ENCODE measurements at regions of chr6 and their contacts with region 1.

Region 1: GRCh38 chr6:8983188-8983688 is 547.9 kb upstream of the SLC35B3 start:
- DNase-seq: peak; percentile 96
- H3K4me3 ChIP-seq: no peak overlapping the region
- H3K27ac ChIP-seq: no peak overlapping the region
- H3K4me1 ChIP-seq: peaks cover 19% of the 10 kb centered on the region
- H3K27me3 ChIP-seq: no peaks in the 10 kb centered on the region
- CTCF ChIP-seq: peak; percentile 98

Region 2: GRCh38 chr6:8321671-8322404 is 661.4 kb before region 1 on chr6:
- CTCF ChIA-PET with region 1: no interaction called
- POLR2A ChIA-PET with region 1: no interaction called
- intact Hi-C with region 1: loop called (anchors 5 kb)
- DNase-seq: peak; percentile 91
- H3K4me3 ChIP-seq: no peak overlapping the region
- H3K27ac ChIP-seq: peak overlapping the region; percentile 99
- H3K4me1 ChIP-seq: peaks cover 48% of the 10 kb centered on the region
- H3K27me3 ChIP-seq: no peaks in the 10 kb centered on the region
- CTCF ChIP-seq: 0 out of 2 replicates have a peak, but pooled peaks have one; percentile 9

Region 3: GRCh38 chr6:8707956-8708772 is 275.1 kb before region 1 on chr6:
- CTCF ChIA-PET with region 1: no interaction called
- POLR2A ChIA-PET with region 1: no interaction called
- intact Hi-C with region 1: loop called (anchors 1 kb)
- DNase-seq: peak; percentile 81
- H3K4me3 ChIP-seq: peak overlapping the region; percentile 20
- H3K27ac ChIP-seq: no peak overlapping the region
- H3K4me1 ChIP-seq: peaks cover 40% of the 10 kb centered on the region
- H3K27me3 ChIP-seq: no peaks in the 10 kb centered on the region
- CTCF ChIP-seq: peak; percentile 77

Region 4: DNA sequence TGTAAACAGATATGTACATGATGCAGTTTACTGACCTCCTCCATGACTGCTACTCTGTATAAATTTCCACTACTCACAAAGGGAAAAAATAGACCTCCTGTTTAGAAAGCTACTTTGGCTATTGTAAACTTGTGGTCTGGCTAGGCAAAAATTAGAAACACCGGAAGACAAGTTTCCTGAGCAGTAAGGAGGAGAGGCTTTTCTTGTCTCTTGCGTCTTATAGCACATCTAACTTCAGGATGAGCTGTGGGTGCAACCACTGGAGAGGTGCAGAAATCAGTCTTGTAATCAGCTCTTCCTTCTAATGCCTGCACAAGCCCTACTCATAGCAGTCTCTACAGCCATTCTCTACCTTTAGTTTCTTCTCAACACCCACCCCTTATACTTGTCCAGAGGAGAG is 251.4 kb before region 1 on chr6:
- CTCF ChIA-PET with region 1: no interaction called
- POLR2A ChIA-PET with region 1: no interaction called
- intact Hi-C with region 1: no loop called
- DNase-seq: no peak
- H3K4me3 ChIP-seq: no peak overlapping the region
- H3K27ac ChIP-seq: no peak overlapping the region
- H3K4me1 ChIP-seq: peaks cover 16% of the 10 kb centered on the region
- H3K27me3 ChIP-seq: no peaks in the 10 kb centered on the region
- CTCF ChIP-seq: no peak

Region 5: GRCh38 chr6:8888468-8888867 is 94.8 kb before region 1 on chr6:
- CTCF ChIA-PET with region 1: no interaction called
- POLR2A ChIA-PET with region 1: no interaction called
- intact Hi-C with region 1: no loop called
- DNase-seq: peak; percentile 52
- H3K4me3 ChIP-seq: no peak overlapping the region
- H3K27ac ChIP-seq: no peak overlapping the region
- H3K4me1 ChIP-seq: no peaks in the 10 kb centered on the region
- H3K27me3 ChIP-seq: no peaks in the 10 kb centered on the region
- CTCF ChIP-seq: peak; percentile 65

Region 6: DNA sequence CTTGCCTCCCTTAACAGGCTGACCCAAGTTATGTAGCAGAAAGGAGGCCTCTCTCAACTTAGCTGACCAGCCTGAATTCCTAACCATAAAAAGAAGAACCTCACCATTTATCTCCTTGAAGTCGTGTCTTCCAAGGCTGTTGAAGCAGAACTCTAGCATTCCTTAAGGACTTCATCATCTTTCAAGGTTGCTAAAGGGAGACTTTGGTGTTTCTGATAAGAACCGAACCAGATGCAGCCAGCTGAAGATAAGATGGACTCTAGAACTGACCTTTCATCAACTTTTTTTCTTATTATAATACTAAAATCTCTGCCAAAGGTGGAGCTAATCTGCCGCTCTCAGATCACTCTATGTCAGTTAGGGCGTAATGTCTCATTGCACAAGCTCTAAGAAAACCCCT is 23.8 kb after region 1 on chr6:
- CTCF ChIA-PET with region 1: no interaction called
- POLR2A ChIA-PET with region 1: no interaction called
- intact Hi-C with region 1: no loop called
- DNase-seq: no peak
- H3K4me3 ChIP-seq: no peak overlapping the region
- H3K27ac ChIP-seq: no peak overlapping the region
- H3K4me1 ChIP-seq: no peaks in the 10 kb centered on the region
- H3K27me3 ChIP-seq: no peaks in the 10 kb centered on the region
- CTCF ChIP-seq: no peak

Region 7: GRCh38 chr6:9126878-9127560 is 143.8 kb after region 1 on chr6:
- CTCF ChIA-PET with region 1: no interaction called
- POLR2A ChIA-PET with region 1: no interaction called
- intact Hi-C with region 1: no loop called
- DNase-seq: peak; percentile 88
- H3K4me3 ChIP-seq: no peak overlapping the region
- H3K27ac ChIP-seq: no peak overlapping the region
- H3K4me1 ChIP-seq: peaks cover 40% of the 10 kb centered on the region
- H3K27me3 ChIP-seq: no peaks in the 10 kb centered on the region
- CTCF ChIP-seq: no peak

Region 8: DNA sequence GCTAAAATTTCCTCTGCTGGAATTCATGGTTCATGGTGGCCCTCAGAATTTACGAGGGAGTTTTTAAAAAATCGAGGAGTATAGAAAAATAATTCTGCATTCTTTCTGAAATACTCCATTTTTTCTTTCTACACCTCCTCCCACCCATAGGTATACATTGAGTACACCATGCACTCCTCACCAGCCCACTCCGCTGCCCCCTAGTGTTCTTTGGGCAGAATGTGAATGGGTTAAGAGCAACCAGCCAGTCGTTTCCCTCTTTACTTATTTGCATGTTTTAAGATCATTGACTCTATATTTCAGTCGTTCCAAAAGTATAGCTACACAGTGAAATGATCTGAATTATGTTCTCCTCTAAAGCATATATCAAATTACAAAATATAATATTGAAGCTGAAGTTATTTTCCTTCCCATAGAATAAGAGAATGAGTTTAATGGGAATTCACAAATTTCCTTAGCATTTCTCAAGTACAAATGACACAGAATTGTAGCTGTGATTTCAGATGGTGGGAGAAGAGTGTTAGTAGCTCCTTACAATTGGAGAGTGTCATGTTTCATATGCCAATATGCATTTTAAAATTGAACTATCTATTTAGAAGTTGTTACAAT is 429.8 kb after region 1 on chr6:
- CTCF ChIA-PET with region 1: no interaction called
- POLR2A ChIA-PET with region 1: no interaction called
- intact Hi-C with region 1: loop called (anchors 2 kb)
- DNase-seq: peak; percentile 80
- H3K4me3 ChIP-seq: no peak overlapping the region
- H3K27ac ChIP-seq: no peak overlapping the region
- H3K4me1 ChIP-seq: peaks cover 4% of the 10 kb centered on the region
- H3K27me3 ChIP-seq: no peaks in the 10 kb centered on the region
- CTCF ChIP-seq: peak; percentile 91

Region 9: DNA sequence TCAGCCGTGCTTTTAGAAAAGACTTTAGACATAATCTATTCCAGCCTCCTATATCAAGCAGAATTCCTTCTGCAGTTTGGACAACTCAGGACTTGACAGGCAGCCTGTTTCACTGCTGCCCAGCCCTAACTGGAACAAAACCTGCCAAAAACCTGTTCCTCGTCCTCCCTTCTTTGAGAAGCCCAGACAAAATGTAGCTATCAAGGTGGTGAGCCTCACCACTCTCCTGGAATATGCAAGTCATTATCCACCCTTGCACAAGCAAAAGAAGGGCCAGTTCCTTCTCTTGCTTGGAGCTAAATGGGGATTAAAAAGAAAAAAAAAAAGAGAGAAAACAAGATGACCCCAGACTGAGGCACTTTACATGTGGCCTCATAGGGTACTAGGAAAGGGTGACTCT is 1367.5 kb after region 1 on chr6:
- CTCF ChIA-PET with region 1: interaction called, 18 read pairs
- POLR2A ChIA-PET with region 1: no interaction called
- intact Hi-C with region 1: no loop called
- DNase-seq: no peak
- H3K4me3 ChIP-seq: no peak overlapping the region
- H3K27ac ChIP-seq: no peak overlapping the region
- H3K4me1 ChIP-seq: no peaks in the 10 kb centered on the region
- H3K27me3 ChIP-seq: no peaks in the 10 kb centered on the region
- CTCF ChIP-seq: no peak

Region 10: DNA sequence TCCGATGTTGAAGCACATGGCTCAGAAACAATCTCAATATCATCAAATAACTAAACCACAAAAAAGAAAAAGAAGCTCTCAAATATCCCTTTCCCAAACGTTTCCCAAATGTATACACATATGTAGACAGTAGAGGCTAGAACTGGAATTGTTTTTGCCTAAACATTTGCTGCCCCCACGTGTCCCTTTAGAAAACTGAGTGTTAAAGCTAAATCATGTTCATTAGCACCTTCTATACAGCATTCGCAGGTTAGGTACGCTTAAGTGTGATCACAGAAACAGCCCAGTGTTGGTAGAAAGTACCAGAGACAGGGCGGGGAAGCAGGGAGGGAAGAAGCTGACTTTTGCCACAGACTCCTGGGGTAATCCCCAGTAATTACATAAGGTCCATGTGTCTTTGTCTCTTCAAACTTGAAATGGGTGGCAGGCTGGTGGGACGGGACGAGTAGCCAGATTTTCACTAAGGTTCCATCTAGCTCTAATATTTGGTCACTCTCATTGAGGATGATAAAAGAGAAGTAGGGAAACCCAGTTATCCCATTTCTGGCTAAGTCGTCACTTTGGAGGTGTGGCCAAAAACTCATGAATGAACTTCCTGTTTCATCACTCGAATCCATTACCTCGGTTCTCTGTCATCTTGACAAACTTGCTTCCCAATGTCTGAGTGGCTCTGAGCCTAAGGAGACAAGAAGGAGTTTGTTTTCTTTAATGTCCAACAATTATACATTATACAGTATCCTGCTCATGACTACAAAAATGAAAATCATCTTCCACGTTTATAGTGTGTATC is 1446.6 kb after region 1 on chr6:
- CTCF ChIA-PET with region 1: interaction called, 6 read pairs
- POLR2A ChIA-PET with region 1: no interaction called
- intact Hi-C with region 1: loop called (anchors 1 kb)
- DNase-seq: peak; percentile 85
- H3K4me3 ChIP-seq: peak overlapping the region; percentile 2
- H3K27ac ChIP-seq: peak overlapping the region; percentile 51
- H3K4me1 ChIP-seq: peaks cover 38% of the 10 kb centered on the region
- H3K27me3 ChIP-seq: no peaks in the 10 kb centered on the region
- CTCF ChIP-seq: peak; percentile 78

Measured in A673 (cell line).